ENCODE measurements at regions of chr15 and their contacts with region 1.

Region 1: GRCh38 chr15:42553554-42553953 is 4.9 kb downstream of the HAUS2 start:
- DNase-seq: no peak
- H3K4me3 Mint-ChIP-seq: no peak overlapping the region
- H3K27ac Mint-ChIP-seq: no peak overlapping the region
- H3K4me1 Mint-ChIP-seq: peaks cover 11% of the 10 kb centered on the region
- H3K27me3 Mint-ChIP-seq: no peaks in the 10 kb centered on the region
- CTCF ChIP-seq: no peak

Region 2: GRCh38 chr15:41154412-41154811 is 1399.1 kb before region 1 on chr15:
- CTCF ChIA-PET with region 1: no interaction called
- intact Hi-C with region 1: no loop called
- DNase-seq: no peak
- H3K4me3 Mint-ChIP-seq: no peak overlapping the region
- H3K27ac Mint-ChIP-seq: no peak overlapping the region
- H3K4me1 Mint-ChIP-seq: no peaks in the 10 kb centered on the region
- H3K27me3 Mint-ChIP-seq: no peaks in the 10 kb centered on the region
- CTCF ChIP-seq: no peak

Region 3: DNA sequence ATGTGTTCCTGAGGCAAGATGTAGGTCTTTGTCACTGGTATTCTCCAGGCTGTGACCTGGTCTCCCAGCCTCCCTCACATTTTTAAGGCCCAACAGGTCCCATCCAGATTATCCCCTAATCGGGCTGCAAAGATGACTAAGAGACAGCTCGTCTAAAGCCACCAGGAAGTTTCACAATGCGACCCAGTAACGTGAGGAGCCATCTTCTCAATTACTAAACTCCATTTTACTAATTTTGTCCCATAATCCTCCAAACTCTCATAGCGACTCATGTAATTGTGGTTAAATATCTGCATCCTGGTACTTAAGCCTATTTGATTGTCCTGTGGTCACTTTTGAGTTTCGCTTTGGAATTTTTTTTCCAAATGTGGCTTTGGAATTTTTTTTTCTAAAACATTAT is 388.4 kb before region 1 on chr15:
- CTCF ChIA-PET with region 1: interaction called, 10 read pairs
- intact Hi-C with region 1: no loop called
- DNase-seq: no peak
- H3K4me3 Mint-ChIP-seq: no peak overlapping the region
- H3K27ac Mint-ChIP-seq: no peak overlapping the region
- H3K4me1 Mint-ChIP-seq: no peaks in the 10 kb centered on the region
- H3K27me3 Mint-ChIP-seq: no peaks in the 10 kb centered on the region
- CTCF ChIP-seq: no peak

Region 4: GRCh38 chr15:42879443-42879842 is 325.9 kb after region 1 on chr15:
- CTCF ChIA-PET with region 1: no interaction called
- intact Hi-C with region 1: no loop called
- DNase-seq: no peak
- H3K4me3 Mint-ChIP-seq: no peak overlapping the region
- H3K27ac Mint-ChIP-seq: no peak overlapping the region
- H3K4me1 Mint-ChIP-seq: no peaks in the 10 kb centered on the region
- H3K27me3 Mint-ChIP-seq: no peaks in the 10 kb centered on the region
- CTCF ChIP-seq: no peak

Measured in Calu3 (cell line).